CD8-positive, alpha-beta T cell (primary cell): ENCODE measurements at regions of chr6 and their contacts with region 1.

Region 1: GRCh38 chr6:13328076-13328874 is at the start of gene TBC1D7:
- DNase-seq: peak; percentile 86 to 96 (median 91)
- ATAC-seq: peak; percentile 84
- H3K4me3 ChIP-seq: peak within 1 kb of the TSS; percentile 86 to 90
- H3K4me3 Mint-ChIP-seq: peak within 1 kb of the TSS; percentile 96
- H3K27ac ChIP-seq: peak within 1 kb of the TSS; percentile 81 to 95
- H3K27ac Mint-ChIP-seq: peak within 1 kb of the TSS; percentile 99
- H3K4me1 ChIP-seq: peaks cover 9% of the 10 kb centered on the region
- H3K4me1 Mint-ChIP-seq: peaks cover 22% of the 10 kb centered on the region
- H3K27me3 ChIP-seq: no peaks in the 10 kb centered on the region
- H3K27me3 Mint-ChIP-seq: no peaks in the 10 kb centered on the region
- CTCF ChIP-seq: no peak
- total RNA-seq, gene TBC1D7: 13.7 to 16.0 TPM

Region 2: GRCh38 chr6:11537229-11538051 is 1790.8 kb before region 1 on chr6 and contains the start of gene TMEM170B:
- CTCF ChIA-PET with region 1: no interaction called
- POLR2A ChIA-PET with region 1: no interaction called
- intact Hi-C with region 1: loop called (anchors 5 kb)
- DNase-seq: peak; percentile 94 to 99 (median 97)
- ATAC-seq: peak; percentile 93
- H3K4me3 ChIP-seq: peak within 1 kb of the TSS; percentile 71 to 85
- H3K4me3 Mint-ChIP-seq: peak within 1 kb of the TSS; percentile 85
- H3K27ac ChIP-seq: peak within 1 kb of the TSS; percentile 36 to 60
- H3K27ac Mint-ChIP-seq: peak within 1 kb of the TSS; percentile 74
- H3K4me1 ChIP-seq: peaks cover 10% of the 10 kb centered on the region
- H3K4me1 Mint-ChIP-seq: peaks cover 18% of the 10 kb centered on the region
- H3K27me3 ChIP-seq: no peaks in the 10 kb centered on the region
- H3K27me3 Mint-ChIP-seq: peaks cover 7% of the 10 kb centered on the region
- CTCF ChIP-seq: no peak
- total RNA-seq, gene TMEM170B: 2.2 TPM

Region 3: DNA sequence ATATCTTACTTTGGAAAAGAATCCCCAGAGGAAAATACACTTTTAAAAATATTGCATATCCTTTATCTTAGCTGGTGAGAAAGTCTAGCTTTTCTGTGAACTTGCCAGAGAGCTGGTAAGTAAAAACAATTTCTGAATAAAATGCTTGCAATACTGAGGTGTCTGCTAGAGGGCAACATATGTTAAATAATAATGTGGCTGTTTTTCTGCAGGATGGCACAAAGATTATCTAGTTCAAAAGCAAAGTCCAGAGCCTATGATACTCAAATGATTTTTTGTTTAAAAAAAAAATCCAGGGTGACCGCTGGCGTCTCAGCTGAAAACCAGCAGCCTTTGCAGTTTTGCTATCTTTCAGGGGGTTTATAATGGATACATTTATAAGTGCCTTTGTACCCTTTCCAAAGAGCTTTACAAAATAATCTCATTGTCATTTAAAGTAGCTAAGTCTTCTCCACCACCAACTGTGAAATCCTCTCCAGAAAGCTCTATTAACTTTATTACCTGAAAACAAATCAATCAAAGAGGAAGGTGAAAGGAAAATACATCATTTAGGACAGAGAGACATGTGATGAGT is 416.8 kb before region 1 on chr6:
- CTCF ChIA-PET with region 1: interaction called, 11 read pairs
- POLR2A ChIA-PET with region 1: no interaction called
- intact Hi-C with region 1: loop called in 1 of 2 experiments (anchors 2 kb)
- DNase-seq: peak in 2 of 9 experiments; percentile 11 to 38
- ATAC-seq: no peak
- H3K4me3 ChIP-seq: no peak overlapping the region
- H3K4me3 Mint-ChIP-seq: no peak overlapping the region
- H3K27ac ChIP-seq: no peak overlapping the region
- H3K27ac Mint-ChIP-seq: no peak overlapping the region
- H3K4me1 ChIP-seq: no peaks in the 10 kb centered on the region
- H3K4me1 Mint-ChIP-seq: no peaks in the 10 kb centered on the region
- H3K27me3 ChIP-seq: no peaks in the 10 kb centered on the region
- H3K27me3 Mint-ChIP-seq: peaks cover 4% of the 10 kb centered on the region
- CTCF ChIP-seq: no peak

Region 4: DNA sequence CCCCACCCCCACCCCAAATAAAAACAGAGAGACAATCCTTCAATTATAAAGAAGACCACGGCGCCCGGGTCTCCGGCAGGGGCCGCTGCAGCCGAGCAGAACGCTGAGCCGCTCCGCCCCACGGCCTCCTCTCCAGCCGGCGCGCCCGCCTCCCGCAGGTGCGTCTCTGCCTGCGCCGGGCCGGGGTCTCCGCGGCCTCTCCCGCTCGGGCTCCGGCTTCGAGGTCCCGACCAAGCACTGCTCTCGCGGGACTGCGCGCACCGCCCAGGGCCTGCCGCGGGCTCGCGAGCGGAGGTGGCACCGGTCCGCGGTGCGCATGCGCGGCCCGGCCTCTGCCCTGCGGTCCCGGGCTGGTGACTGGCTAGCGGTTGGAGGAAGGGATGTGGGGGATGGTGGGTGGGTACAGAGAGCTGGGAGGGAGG is 245.9 kb after region 1 on chr6:
- CTCF ChIA-PET with region 1: interaction called, 12 read pairs
- POLR2A ChIA-PET with region 1: interaction called, 13 read pairs
- intact Hi-C with region 1: loop called (anchors 1 to 2 kb)
- DNase-seq: peak; percentile 84 to 98 (median 94)
- ATAC-seq: peak; percentile 84
- H3K4me3 ChIP-seq: peak overlapping the region; percentile 93 to 97
- H3K4me3 Mint-ChIP-seq: peak overlapping the region; percentile 97
- H3K27ac ChIP-seq: peak overlapping the region; percentile 80 to 85
- H3K27ac Mint-ChIP-seq: peak overlapping the region; percentile 97
- H3K4me1 ChIP-seq: peaks cover 4% of the 10 kb centered on the region
- H3K4me1 Mint-ChIP-seq: peaks cover 28% of the 10 kb centered on the region
- H3K27me3 ChIP-seq: no peaks in the 10 kb centered on the region
- H3K27me3 Mint-ChIP-seq: no peaks in the 10 kb centered on the region
- CTCF ChIP-seq: peak; percentile 56

Region 5: GRCh38 chr6:13711733-13712598 is 383.7 kb after region 1 on chr6 and contains the start of gene RANBP9:
- CTCF ChIA-PET with region 1: no interaction called
- POLR2A ChIA-PET with region 1: interaction called, 3 read pairs
- intact Hi-C with region 1: loop called (anchors 5 kb)
- DNase-seq: peak; percentile 76 to 94 (median 86)
- ATAC-seq: peak; percentile 82
- H3K4me3 ChIP-seq: peak within 1 kb of the TSS; percentile 77 to 81
- H3K4me3 Mint-ChIP-seq: peak within 1 kb of the TSS; percentile 93
- H3K27ac ChIP-seq: peak within 1 kb of the TSS; percentile 77 to 83
- H3K27ac Mint-ChIP-seq: peak within 1 kb of the TSS; percentile 97
- H3K4me1 ChIP-seq: peaks cover 22% of the 10 kb centered on the region
- H3K4me1 Mint-ChIP-seq: peaks cover 43% of the 10 kb centered on the region
- H3K27me3 ChIP-seq: no peaks in the 10 kb centered on the region
- H3K27me3 Mint-ChIP-seq: no peaks in the 10 kb centered on the region
- CTCF ChIP-seq: no peak
- total RNA-seq, gene RANBP9: 79.1 to 81.9 TPM

Region 6: GRCh38 chr6:14037402-14038277 is 709.4 kb after region 1 on chr6:
- CTCF ChIA-PET with region 1: no interaction called
- POLR2A ChIA-PET with region 1: no interaction called
- intact Hi-C with region 1: no loop called
- DNase-seq: no peak
- ATAC-seq: no peak
- H3K4me3 ChIP-seq: no peak overlapping the region
- H3K4me3 Mint-ChIP-seq: no peak overlapping the region
- H3K27ac ChIP-seq: no peak overlapping the region
- H3K27ac Mint-ChIP-seq: no peak overlapping the region
- H3K4me1 ChIP-seq: no peaks in the 10 kb centered on the region
- H3K4me1 Mint-ChIP-seq: no peaks in the 10 kb centered on the region
- H3K27me3 ChIP-seq: peaks cover 3% of the 10 kb centered on the region in 2 experiments
- H3K27me3 Mint-ChIP-seq: peaks cover 19% of the 10 kb centered on the region
- CTCF ChIP-seq: no peak

Region 7: DNA sequence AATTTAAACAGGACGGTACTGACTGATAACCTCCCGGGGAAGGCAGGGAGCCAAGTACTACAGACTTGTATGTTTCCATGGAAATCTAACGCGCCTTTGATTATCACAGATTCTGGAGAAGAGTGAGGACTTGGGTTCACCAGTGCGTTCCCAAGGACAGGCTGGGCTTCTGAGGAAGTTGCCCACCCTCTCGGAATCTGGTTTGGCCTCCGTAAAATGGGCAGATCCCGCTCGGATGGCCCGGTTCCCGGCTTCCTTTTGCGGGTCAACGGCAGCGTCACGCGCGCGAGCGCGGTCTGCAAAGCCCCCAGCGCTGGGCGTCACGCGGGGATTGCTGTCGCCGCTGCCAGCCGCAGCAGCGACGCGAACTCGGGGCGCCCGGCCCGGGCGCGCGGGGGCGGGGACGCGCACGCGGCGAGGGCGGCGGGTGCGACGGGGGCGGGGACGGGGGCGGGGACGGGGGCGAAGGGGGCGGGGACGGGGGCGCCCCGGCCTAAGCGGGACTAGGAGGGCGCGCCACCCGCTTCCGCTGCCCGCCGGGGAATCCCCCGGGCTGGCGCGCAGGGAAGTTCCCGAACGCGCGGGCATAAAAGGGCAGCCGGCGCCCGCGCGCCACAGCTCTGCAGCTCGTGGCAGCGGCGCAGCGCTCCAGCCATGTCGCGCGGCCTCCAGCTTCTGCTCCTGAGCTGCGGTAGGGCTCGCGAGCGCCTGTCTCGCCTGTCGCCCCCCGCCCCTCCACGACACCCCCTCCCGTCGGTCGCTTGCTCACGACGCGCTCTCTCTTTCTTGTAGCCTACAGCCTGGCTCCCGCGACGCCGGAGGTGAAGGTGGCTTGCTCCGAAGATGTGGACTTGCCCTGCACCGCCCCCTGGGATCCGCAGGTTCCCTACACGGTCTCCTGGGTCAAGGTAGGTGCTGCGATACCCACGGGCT is 789.1 kb after region 1 on chr6 and contains the start of gene CD83:
- CTCF ChIA-PET with region 1: no interaction called
- POLR2A ChIA-PET with region 1: no interaction called
- intact Hi-C with region 1: loop called in 1 of 2 experiments (anchors 5 kb)
- DNase-seq: peak; percentile 72 to 97 (median 84)
- ATAC-seq: peak; percentile 94
- H3K4me3 ChIP-seq: peak within 1 kb of the TSS; percentile 90 to 92
- H3K4me3 Mint-ChIP-seq: peak within 1 kb of the TSS; percentile 93
- H3K27ac ChIP-seq: peak within 1 kb of the TSS; percentile 66 to 81
- H3K27ac Mint-ChIP-seq: peak within 1 kb of the TSS; percentile 96
- H3K4me1 ChIP-seq: peaks cover 8% of the 10 kb centered on the region
- H3K4me1 Mint-ChIP-seq: peaks cover 39% of the 10 kb centered on the region
- H3K27me3 ChIP-seq: no peaks in the 10 kb centered on the region
- H3K27me3 Mint-ChIP-seq: no peaks in the 10 kb centered on the region
- CTCF ChIP-seq: no peak
- total RNA-seq, gene CD83: 57.2 to 60.4 TPM